HepG2 (cell line): ENCODE measurements at regions of chr10 and their contacts with region 1.

Region 1: GRCh38 chr10:13271552-13272163 is 28.2 kb downstream of the PHYH start:
- DNase-seq: peak; percentile 77
- ATAC-seq: peak; percentile 94
- H3K4me3 ChIP-seq: peak overlapping the region; percentile 59 to 71 (median 66)
- H3K27ac ChIP-seq: peak overlapping the region; percentile 64
- H3K4me1 ChIP-seq: peaks cover 25% of the 10 kb centered on the region
- H3K27me3 ChIP-seq: no peaks in the 10 kb centered on the region
- CTCF ChIP-seq: peak; percentile 95
- EP300 ChIP-seq: no peak
- POLR2A ChIP-seq: 0 out of 4 replicates have a peak, but pooled peaks of 1 of the 2 experiments have one; percentile 33
- RAD21 ChIP-seq: peak; percentile 81

Region 2: GRCh38 chr10:13099666-13100348 is 171.9 kb before region 1 on chr10 and contains the start of gene OPTN:
- CTCF ChIA-PET with region 1: no interaction called
- POLR2A ChIA-PET with region 1: no interaction called
- in situ Hi-C with region 1: no loop called
- intact Hi-C with region 1: loop called (anchors 10 kb)
- DNase-seq: peak; percentile 72
- ATAC-seq: peak; percentile 78
- H3K4me3 ChIP-seq: peak within 1 kb of the TSS; percentile 81 to 86 (median 84)
- H3K27ac ChIP-seq: peak within 1 kb of the TSS; percentile 58
- H3K4me1 ChIP-seq: peaks cover 36% of the 10 kb centered on the region
- H3K27me3 ChIP-seq: no peaks in the 10 kb centered on the region; a peak in 2 of 5 replicates
- CTCF ChIP-seq: peak; percentile 87
- EP300 ChIP-seq: no peak
- POLR2A ChIP-seq: 0 out of 4 replicates have a peak, but pooled peaks of 1 of the 2 experiments have one; percentile 33
- RAD21 ChIP-seq: peak; percentile 44; the same call in 1 of the 2 replicates
- total RNA-seq, gene OPTN: 13.4 and 16.9 TPM in 2 replicates

Region 3: DNA sequence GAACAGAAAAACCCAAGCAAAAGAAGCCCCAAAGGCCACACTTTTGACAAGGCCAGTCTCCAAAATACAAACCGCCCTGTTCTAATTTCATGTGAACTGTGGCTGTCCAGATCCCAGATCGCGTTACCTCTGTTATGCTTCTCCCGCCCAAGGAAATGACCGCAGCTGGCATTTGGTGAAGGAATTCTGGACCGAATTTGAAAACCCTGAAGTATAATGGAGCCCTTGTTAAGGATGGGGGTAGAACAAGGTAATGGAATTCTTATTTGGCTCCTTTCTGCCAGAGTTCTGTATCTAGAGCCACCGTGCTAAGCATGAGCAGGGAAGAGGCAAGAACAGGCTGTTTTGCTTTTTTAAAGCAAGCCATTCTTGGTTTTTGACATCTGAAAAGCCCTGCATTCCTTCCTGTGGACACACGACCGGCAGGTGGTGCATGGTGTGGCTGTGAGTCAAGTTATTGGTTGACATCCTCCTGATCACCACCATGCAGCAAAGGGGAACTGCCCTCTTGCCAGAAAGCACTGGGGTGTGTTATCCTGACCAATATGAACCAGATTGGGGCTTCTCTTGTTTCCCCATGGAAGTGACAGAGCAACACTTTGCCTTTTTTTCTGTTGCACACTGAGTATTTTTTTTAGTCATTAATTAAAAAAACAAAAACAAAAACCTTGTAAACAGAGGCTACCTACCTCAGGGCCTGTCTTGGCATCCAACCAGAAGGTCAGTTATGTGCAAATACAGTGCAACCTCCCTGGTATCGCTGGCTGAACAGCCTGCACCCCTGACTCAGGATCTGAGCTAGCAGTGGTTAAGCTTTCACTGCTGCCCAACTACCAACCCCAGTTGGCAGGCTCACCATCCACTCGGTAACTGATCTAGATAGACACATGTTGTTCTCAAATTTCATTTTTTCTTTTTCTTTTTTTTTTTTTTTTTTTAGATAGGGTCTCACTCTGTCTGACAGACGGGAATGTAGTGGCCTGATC is 51.7 kb before region 1 on chr10:
- CTCF ChIA-PET with region 1: no interaction called
- POLR2A ChIA-PET with region 1: no interaction called
- in situ Hi-C with region 1: no loop called
- intact Hi-C with region 1: loop called (anchors 10 kb)
- DNase-seq: peak; percentile 48
- ATAC-seq: peak; percentile 92
- H3K4me3 ChIP-seq: no peak overlapping the region
- H3K27ac ChIP-seq: no peak overlapping the region
- H3K4me1 ChIP-seq: peaks cover 17% of the 10 kb centered on the region; the same call in 1 of the 2 replicates
- H3K27me3 ChIP-seq: no peaks in the 10 kb centered on the region
- CTCF ChIP-seq: peak; percentile 75
- EP300 ChIP-seq: no peak
- POLR2A ChIP-seq: no peak
- RAD21 ChIP-seq: peak; percentile 49

Region 4: DNA sequence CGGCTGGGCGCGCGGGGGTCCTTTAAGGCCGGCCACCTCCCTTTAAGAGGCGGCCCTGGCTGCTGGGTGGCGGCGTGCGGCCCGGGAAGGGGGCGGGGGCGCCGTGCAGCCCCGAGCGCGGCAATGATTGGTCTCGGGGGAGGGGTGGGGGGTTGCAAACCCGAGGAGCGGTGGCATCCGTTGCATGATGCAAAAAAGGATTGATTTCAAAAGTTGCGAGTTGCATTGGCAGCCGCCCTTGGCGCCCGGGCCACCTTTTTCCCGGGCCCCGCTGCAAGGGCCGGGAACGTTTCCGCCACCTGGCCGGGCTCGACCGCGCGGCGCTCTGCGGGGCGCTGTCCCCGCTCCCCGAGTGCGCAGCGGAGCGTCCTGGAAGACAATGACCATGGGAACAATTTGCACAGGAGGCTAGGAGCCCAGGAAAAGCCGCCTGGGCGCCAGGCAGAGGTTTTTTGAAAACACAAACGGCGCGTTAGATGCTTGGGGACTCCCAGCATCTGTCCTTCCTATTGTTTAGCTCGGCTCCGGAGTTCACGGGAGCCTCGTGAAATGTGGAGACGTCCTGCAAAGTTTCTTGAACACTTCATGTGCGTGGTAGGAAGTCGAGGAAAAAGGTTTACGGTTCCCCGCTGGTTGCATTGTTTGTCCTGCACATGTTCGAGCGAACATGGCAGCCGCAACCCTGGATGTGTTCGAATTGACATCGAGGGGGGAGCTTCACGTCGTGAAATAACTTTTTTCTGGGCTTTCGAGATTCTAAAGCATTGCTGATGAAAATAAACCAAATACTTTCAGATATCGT is 76.8 kb after region 1 on chr10 and contains the start of gene SEPHS1:
- CTCF ChIA-PET with region 1: interaction called, 6 read pairs
- POLR2A ChIA-PET with region 1: interaction called, 3 read pairs
- in situ Hi-C with region 1: no loop called
- intact Hi-C with region 1: loop called (anchors 1 kb)
- DNase-seq: peak; percentile 75
- ATAC-seq: peak; percentile 76
- H3K4me3 ChIP-seq: peak within 1 kb of the TSS; percentile 79 to 96 (median 86)
- H3K27ac ChIP-seq: peak within 1 kb of the TSS; percentile 92
- H3K4me1 ChIP-seq: peaks cover 49% of the 10 kb centered on the region
- H3K27me3 ChIP-seq: no peaks in the 10 kb centered on the region; a peak in 1 of 5 replicates
- CTCF ChIP-seq: no peak; the same call in 1 of the 2 replicates
- EP300 ChIP-seq: no peak
- POLR2A ChIP-seq: peak; percentile 57 to 62; a peak in 3 of 4 replicates
- RAD21 ChIP-seq: no peak
- total RNA-seq, gene SEPHS1: 61.5 and 76.0 TPM in 2 replicates